ENCODE measurements at regions of chr9 and their contacts with region 1.

Region 1: GRCh38 chr9:136644598-136645351 is 17.9 kb upstream of the EGFL7 start:
- DNase-seq: no peak
- H3K4me3 Mint-ChIP-seq: no peak overlapping the region
- H3K27ac Mint-ChIP-seq: no peak overlapping the region
- H3K4me1 Mint-ChIP-seq: no peaks in the 10 kb centered on the region
- H3K27me3 Mint-ChIP-seq: peaks cover 15% of the 10 kb centered on the region
- CTCF ChIP-seq: peak; percentile 96

Region 2: DNA sequence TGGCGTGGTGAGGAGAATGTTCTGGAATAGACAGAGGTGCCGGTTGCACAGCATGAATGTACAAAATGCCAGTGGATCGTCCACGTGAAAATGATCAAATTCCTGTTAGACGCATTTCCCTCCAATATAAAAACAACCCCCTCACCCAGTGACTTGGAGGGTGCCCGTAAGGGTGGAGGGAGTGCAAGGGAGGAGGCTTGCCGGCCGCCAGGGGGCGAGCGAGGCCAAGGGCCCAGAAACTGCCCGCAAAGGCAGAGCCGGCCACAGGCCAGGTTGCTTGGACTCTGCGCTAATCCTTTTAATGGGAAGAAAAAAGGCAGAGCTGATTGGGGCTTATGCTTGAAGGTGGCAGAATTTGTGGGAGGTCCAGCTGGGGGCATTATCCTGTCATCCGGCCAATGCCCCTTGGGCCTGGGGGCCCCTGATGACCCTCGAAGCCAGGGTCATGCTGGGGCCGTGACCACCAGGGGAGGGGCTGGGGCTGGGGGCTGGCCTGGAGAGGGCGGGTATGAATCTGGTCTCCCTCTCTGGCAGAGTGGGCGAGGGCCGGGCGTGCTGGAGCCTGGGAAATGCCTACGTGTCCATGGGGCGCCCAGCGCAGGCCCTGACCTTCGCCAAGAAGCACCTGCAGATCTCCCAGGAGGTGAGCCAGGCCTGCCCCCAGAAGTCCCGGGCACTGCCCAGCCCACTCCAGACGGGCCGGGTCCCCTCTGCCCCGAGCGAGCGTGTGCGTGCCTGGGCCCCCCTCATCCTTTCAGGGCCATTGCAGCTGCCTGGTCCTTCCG is 305.4 kb before region 1 on chr9:
- CTCF ChIA-PET with region 1: no interaction called
- POLR2A ChIA-PET with region 1: no interaction called
- intact Hi-C with region 1: loop called (anchors 5 kb)
- DNase-seq: peak; percentile 73
- H3K4me3 Mint-ChIP-seq: no peak overlapping the region
- H3K27ac Mint-ChIP-seq: no peak overlapping the region
- H3K4me1 Mint-ChIP-seq: no peaks in the 10 kb centered on the region
- H3K27me3 Mint-ChIP-seq: no peaks in the 10 kb centered on the region
- CTCF ChIP-seq: peak; percentile 93

Region 3: DNA sequence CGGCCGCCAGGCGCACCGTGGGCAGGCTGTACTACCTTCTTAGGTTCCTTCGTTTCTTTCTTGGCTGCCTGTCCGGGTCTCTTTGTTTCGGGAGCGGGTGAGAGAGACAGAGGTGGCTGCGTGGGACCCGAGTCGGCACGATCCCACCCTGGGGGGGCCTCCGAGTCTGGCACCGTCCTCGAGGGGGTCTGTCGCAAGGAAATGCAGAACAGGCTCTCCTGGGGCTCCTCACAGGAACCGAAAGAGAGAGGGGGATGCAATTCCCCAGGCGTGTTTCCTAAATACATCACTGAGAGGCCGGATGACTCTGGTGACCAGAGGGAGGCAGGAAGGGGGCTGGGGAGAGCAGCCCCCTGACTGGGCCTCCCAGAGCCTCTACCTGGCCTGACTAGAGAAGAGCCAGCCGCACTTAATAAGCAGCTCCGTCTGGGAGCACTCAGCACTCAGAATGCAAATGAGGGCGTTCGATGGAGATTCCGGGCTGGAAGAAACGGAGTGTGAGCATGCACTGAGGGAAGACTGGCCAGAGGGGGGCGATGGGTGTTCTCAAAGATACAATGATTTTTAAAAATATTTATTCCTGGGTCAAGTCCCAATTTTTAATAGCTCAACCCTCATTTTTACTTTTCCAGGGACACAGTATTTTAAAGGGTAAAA is 193.4 kb before region 1 on chr9:
- CTCF ChIA-PET with region 1: no interaction called
- POLR2A ChIA-PET with region 1: no interaction called
- intact Hi-C with region 1: no loop called
- DNase-seq: no peak
- H3K4me3 Mint-ChIP-seq: no peak overlapping the region
- H3K27ac Mint-ChIP-seq: no peak overlapping the region
- H3K4me1 Mint-ChIP-seq: no peaks in the 10 kb centered on the region
- H3K27me3 Mint-ChIP-seq: no peaks in the 10 kb centered on the region
- CTCF ChIP-seq: no peak

Region 4: GRCh38 chr9:136465500-136466154 is 179.1 kb before region 1 on chr9:
- CTCF ChIA-PET with region 1: no interaction called
- POLR2A ChIA-PET with region 1: no interaction called
- intact Hi-C with region 1: no loop called
- DNase-seq: no peak
- H3K4me3 Mint-ChIP-seq: no peak overlapping the region
- H3K27ac Mint-ChIP-seq: no peak overlapping the region
- H3K4me1 Mint-ChIP-seq: no peaks in the 10 kb centered on the region
- H3K27me3 Mint-ChIP-seq: no peaks in the 10 kb centered on the region
- CTCF ChIP-seq: no peak

Region 5: DNA sequence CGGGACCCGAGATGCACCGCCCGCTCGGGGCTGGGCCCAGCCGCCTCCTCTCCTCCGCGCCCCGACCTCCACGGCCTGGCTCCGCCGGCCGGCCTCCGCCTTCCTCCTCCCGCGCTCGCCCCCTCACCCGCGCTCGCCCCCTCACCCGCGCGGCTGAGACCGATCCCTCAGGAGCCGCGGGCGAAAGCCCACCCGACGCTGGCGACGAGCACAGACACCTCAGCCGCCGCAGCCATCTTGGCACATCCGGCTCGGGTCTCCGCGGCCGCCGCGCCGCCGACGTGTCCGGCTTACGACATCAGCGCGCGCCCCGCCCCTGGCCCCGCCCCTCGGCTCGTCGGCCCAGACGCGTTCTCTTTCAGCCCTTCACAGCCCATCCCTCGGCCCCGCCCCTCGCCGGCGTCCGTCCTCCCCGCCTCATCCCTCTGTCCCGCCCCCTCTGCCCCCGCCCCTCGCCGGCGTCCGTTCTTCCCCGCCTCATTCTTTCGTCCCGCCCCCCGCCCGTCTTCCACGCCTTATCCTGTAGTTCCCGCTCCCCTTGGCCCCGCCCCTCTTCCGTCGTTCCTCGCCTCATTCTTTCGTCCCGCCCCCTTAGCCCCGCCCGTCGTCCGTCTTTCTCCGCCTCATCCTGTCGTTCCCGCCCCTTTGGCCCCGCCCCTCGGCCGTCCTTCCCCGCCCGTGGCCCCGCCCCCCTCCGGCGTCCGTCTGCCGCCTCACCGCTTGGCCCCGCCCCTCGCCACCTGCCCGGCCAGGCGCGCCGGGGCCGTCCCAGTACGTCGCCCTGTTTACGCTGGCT is 161.8 kb before region 1 on chr9 and contains the start of gene SEC16A:
- CTCF ChIA-PET with region 1: interaction called, 8 read pairs
- POLR2A ChIA-PET with region 1: interaction called, 3 read pairs
- intact Hi-C with region 1: loop called (anchors 1 kb)
- DNase-seq: peak; percentile 98
- H3K4me3 Mint-ChIP-seq: peak within 1 kb of the TSS; percentile 98
- H3K27ac Mint-ChIP-seq: peak within 1 kb of the TSS; percentile 100
- H3K4me1 Mint-ChIP-seq: peaks cover 10% of the 10 kb centered on the region
- H3K27me3 Mint-ChIP-seq: no peaks in the 10 kb centered on the region
- CTCF ChIP-seq: no peak
- total RNA-seq, gene SEC16A: 85.8 and 88.8 TPM in 2 replicates

Region 6: DNA sequence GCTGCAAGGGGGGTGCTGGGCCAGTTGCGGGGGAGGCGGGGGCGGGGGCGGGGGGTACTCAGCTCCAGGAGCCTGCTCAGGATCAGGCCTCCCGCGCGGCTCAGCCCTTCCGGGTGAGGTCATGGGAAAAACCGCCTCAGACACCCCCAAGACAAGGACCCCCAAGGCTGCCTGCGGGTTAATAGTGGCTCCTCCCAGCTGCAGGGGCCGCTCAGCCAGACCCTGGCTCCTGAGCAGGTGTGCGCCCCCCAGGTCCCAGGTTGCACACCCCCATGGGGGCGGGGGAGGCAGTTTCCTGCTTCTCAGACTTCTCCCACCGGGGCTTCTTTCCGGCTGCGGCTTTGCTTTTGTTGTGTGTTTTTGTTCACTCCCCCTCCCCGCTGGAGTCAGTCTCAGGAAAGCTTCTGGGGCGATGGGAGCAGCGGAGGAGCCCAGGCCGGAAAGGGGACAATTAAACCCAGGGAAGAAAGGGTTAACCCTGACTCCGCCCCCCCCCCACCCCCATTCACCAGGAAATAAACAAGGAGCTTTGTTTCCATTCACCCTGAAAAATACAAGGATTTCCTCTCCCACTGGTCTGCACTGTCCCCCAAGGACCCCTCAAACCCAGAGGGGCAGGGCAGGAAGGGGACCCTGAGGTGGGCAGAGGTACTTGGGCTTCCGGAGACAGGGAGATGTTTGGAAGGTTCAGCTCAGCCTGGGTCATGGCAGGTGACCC is 56.7 kb before region 1 on chr9:
- CTCF ChIA-PET with region 1: no interaction called
- POLR2A ChIA-PET with region 1: no interaction called
- intact Hi-C with region 1: no loop called
- DNase-seq: no peak
- H3K4me3 Mint-ChIP-seq: no peak overlapping the region
- H3K27ac Mint-ChIP-seq: no peak overlapping the region
- H3K4me1 Mint-ChIP-seq: no peaks in the 10 kb centered on the region
- H3K27me3 Mint-ChIP-seq: peaks cover 22% of the 10 kb centered on the region
- CTCF ChIP-seq: no peak

Region 7: GRCh38 chr9:136631038-136632000 is 13.5 kb before region 1 on chr9:
- CTCF ChIA-PET with region 1: interaction called, 10 read pairs
- POLR2A ChIA-PET with region 1: interaction called, 4 read pairs
- intact Hi-C with region 1: no loop called
- DNase-seq: peak; percentile 78
- H3K4me3 Mint-ChIP-seq: no peak overlapping the region
- H3K27ac Mint-ChIP-seq: no peak overlapping the region
- H3K4me1 Mint-ChIP-seq: peaks cover 11% of the 10 kb centered on the region
- H3K27me3 Mint-ChIP-seq: no peaks in the 10 kb centered on the region
- CTCF ChIP-seq: peak; percentile 82

Region 8: GRCh38 chr9:136694236-136694942 is 49.6 kb after region 1 on chr9:
- CTCF ChIA-PET with region 1: interaction called, 3 read pairs
- POLR2A ChIA-PET with region 1: no interaction called
- intact Hi-C with region 1: loop called (anchors 5 kb)
- DNase-seq: peak; percentile 62
- H3K4me3 Mint-ChIP-seq: no peak overlapping the region
- H3K27ac Mint-ChIP-seq: peak overlapping the region; percentile 70
- H3K4me1 Mint-ChIP-seq: peaks cover 24% of the 10 kb centered on the region
- H3K27me3 Mint-ChIP-seq: no peaks in the 10 kb centered on the region
- CTCF ChIP-seq: peak; percentile 79

Region 9: GRCh38 chr9:136740971-136741882 is 96.5 kb after region 1 on chr9:
- CTCF ChIA-PET with region 1: no interaction called
- POLR2A ChIA-PET with region 1: no interaction called
- intact Hi-C with region 1: no loop called
- DNase-seq: no peak
- H3K4me3 Mint-ChIP-seq: no peak overlapping the region
- H3K27ac Mint-ChIP-seq: no peak overlapping the region
- H3K4me1 Mint-ChIP-seq: no peaks in the 10 kb centered on the region
- H3K27me3 Mint-ChIP-seq: peaks cover 39% of the 10 kb centered on the region
- CTCF ChIP-seq: no peak

Measured in MCF 10A (cell line).